Adrenal gland (tissue), 19 donors: ENCODE measurements at regions of chr4 and their contacts with region 1.

Region 1: DNA sequence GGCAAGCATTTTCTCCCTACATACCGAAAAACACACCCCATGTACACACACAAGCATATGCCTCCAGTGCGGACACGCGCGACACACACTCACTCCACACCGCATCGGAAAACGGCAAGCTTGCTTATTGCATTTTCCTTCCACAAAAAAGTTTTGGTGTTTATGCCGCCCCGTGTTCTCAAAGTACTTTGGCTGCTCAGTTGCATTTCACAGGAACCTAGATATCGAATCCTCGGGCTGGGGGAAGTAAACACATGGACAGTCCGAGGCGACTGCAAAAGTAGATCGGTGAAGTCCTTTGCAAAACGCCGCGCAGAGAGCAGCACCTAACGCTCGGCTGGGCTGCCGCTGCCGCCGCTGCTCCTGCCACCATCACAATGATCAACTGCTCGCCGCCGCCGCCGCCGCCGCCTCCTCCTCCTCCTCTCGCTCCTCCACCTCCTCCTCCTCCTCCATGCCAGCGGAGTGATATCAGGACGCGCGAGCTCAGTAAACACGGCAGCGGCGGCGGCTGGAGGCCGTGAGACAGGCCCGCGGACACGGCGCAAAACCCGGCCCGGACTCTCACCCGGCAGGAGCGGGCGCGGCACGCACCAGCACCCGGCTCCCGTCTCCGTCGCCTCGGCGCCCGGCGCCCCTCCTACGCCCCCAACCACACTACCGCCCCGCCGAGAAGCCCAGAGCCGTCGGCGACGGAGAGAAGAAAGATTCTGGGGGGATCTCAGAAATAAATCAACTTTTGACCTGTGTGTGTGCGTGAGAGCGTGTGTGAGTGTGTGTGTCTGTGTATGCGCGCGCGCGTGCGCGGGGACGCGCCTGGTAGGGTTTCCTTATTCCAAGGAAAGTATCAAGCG is at the start of gene MAML3:
- DNase-seq: peak; percentile 95 to 98 (median 96)
- H3K4me3 ChIP-seq: peak within 1 kb of the TSS; percentile 80 to 93 (median 88)
- H3K27ac ChIP-seq: peak within 1 kb of the TSS; percentile 95 to 99 (median 98)
- H3K4me1 ChIP-seq: peaks cover 0 to 14% of the 10 kb centered on the region in 2 donors
- H3K27me3 ChIP-seq: no peaks in the 10 kb centered on the region
- CTCF ChIP-seq: peak in 2 of 6 experiments; percentile 7 to 47
- POLR2A ChIP-seq: peak; percentile 90 to 96
- total RNA-seq, gene MAML3: 3.4 to 15.9 (median 9.5) TPM

Region 2: DNA sequence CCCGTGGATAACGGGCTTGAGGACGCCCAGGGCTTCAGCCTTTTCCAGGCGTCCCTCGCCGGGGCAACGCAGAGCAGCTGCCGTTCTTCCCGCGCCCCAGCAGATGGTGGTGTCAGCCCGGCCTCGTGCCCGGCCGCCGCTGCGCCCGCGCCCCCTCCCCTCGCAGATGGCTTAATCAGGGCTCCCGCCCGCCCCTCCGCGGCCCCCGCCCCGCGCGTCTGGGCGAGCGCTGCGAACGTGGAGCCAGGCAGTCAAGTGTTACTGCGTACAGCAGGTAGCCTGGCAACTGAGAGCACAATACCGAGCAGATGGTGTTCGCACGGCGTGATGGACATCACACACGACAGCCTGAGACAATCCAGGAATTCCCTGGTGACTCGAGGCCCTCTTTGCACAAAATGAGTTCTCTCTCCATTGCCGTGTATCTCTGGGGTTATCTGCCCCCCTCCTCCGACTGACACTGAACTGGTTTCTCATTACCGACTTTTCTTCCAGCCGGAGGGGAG is 419.0 kb before region 1 on chr4:
- intact Hi-C with region 1: loop called (anchors 10 kb)
- DNase-seq: peak; percentile 90 to 97 (median 93)
- H3K4me3 ChIP-seq: peak overlapping the region; percentile 13 to 51 (median 18)
- H3K27ac ChIP-seq: peak overlapping the region; percentile 75 to 96 (median 86)
- H3K4me1 ChIP-seq: peaks cover 19 to 53% of the 10 kb centered on the region in 2 donors
- H3K27me3 ChIP-seq: no peaks in the 10 kb centered on the region
- CTCF ChIP-seq: peak; percentile 31 to 91 (median 78)
- POLR2A ChIP-seq: peak in 1 of 2 donors; percentile 58

Region 3: DNA sequence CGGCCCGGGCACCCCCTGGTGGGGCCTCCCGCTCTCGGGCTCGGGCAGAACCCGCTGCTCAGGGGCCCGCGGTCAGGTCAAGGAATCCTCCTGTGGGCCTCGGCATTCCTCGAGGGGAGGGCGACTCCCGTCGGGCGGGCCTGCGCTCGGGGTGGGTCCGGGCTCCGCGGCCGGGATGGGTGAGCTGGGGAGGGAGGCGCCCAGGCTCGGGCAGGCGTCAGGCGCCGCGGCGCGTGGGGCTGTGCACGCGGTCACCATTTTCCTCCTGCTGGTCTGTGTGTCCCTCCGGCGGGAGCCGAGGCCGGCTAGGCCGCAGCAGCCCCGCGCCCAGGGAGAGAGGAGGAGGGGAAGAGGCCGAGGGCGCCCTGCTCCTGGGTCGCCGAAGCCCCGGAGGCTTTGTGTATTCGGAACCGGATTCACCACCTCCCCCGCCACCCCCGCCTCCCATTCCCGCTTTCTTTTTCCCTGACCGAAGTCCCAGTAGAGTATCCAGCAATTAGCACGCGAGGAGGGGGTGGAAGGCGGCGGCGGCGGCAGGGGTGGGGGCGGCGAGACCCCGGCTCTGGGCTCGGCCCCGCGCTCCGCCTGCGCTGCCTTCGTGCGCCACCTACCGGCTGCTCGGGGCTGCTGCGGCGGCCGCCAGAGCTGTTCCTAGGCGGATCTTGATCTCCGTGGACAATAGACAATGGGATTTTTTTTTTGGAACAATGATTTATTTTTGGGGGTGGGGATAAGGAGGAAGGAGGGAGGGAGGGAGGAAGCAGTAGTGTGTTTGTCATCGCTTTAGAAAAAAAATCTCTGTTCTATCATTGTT is 99.0 kb after region 1 on chr4:
- intact Hi-C with region 1: loop called (anchors 2 to 5 kb)
- DNase-seq: peak; percentile 77 to 88 (median 79)
- H3K4me3 ChIP-seq: peak overlapping the region in 2 of 4 donors; percentile 54 to 66
- H3K27ac ChIP-seq: peak overlapping the region; percentile 53 to 95 (median 92)
- H3K4me1 ChIP-seq: peaks cover 5 to 29% of the 10 kb centered on the region in 2 donors
- H3K27me3 ChIP-seq: no peaks in the 10 kb centered on the region
- CTCF ChIP-seq: peak; percentile 65 to 97 (median 80)
- POLR2A ChIP-seq: peak in 1 of 2 donors; percentile 48

Region 4: GRCh38 chr4:140286456-140286855 is 132.5 kb after region 1 on chr4:
- intact Hi-C with region 1: no loop called
- DNase-seq: peak; percentile 78 to 93 (median 88)
- H3K4me3 ChIP-seq: peak overlapping the region in 1 of 4 donors; percentile 35
- H3K27ac ChIP-seq: peak overlapping the region in 1 of 5 donors; percentile 23
- H3K4me1 ChIP-seq: peaks cover 0 to 7% of the 10 kb centered on the region in 2 donors
- H3K27me3 ChIP-seq: no peaks in the 10 kb centered on the region
- CTCF ChIP-seq: no peak
- POLR2A ChIP-seq: peak in 1 of 2 donors; percentile 56

Region 5: GRCh38 chr4:140326395-140326993 is 172.5 kb after region 1 on chr4:
- intact Hi-C with region 1: loop called in 1 of 2 experiments (anchors 10 kb)
- DNase-seq: peak; percentile 22 to 76 (median 37)
- H3K4me3 ChIP-seq: no peak overlapping the region
- H3K27ac ChIP-seq: no peak overlapping the region
- H3K4me1 ChIP-seq: no peaks in the 10 kb centered on the region
- H3K27me3 ChIP-seq: no peaks in the 10 kb centered on the region
- CTCF ChIP-seq: peak; percentile 37 to 72 (median 60)
- POLR2A ChIP-seq: no peak